Posterior vena cava (tissue), 2 donors: ENCODE measurements at regions of chr19 and their contacts with region 1.

Region 1: GRCh38 chr19:1074544-1075283 is 7.7 kb downstream of the ARHGAP45 start:
- DNase-seq: peak; percentile 97

Region 2: GRCh38 chr19:1118999-1119398 is 44.3 kb after region 1 on chr19:
- intact Hi-C with region 1: loop called in 1 of 2 experiments (anchors 1 kb)
- DNase-seq: no peak

Region 3: GRCh38 chr19:1223018-1223855 is 148.5 kb after region 1 on chr19:
- intact Hi-C with region 1: no loop called
- DNase-seq: no peak